OCI-LY7 (cell line): ENCODE measurements at regions of chr16 and their contacts with region 1.

Region 1: GRCh38 chr16:71484006-71484893 is 4.9 kb downstream of the ZNF19 start:
- DNase-seq: peak; percentile 90
- H3K4me3 ChIP-seq: peak overlapping the region; percentile 92
- H3K27ac ChIP-seq: peak overlapping the region; percentile 74
- H3K4me1 ChIP-seq: peaks cover 8% of the 10 kb centered on the region
- CTCF ChIP-seq: no peak

Region 2: DNA sequence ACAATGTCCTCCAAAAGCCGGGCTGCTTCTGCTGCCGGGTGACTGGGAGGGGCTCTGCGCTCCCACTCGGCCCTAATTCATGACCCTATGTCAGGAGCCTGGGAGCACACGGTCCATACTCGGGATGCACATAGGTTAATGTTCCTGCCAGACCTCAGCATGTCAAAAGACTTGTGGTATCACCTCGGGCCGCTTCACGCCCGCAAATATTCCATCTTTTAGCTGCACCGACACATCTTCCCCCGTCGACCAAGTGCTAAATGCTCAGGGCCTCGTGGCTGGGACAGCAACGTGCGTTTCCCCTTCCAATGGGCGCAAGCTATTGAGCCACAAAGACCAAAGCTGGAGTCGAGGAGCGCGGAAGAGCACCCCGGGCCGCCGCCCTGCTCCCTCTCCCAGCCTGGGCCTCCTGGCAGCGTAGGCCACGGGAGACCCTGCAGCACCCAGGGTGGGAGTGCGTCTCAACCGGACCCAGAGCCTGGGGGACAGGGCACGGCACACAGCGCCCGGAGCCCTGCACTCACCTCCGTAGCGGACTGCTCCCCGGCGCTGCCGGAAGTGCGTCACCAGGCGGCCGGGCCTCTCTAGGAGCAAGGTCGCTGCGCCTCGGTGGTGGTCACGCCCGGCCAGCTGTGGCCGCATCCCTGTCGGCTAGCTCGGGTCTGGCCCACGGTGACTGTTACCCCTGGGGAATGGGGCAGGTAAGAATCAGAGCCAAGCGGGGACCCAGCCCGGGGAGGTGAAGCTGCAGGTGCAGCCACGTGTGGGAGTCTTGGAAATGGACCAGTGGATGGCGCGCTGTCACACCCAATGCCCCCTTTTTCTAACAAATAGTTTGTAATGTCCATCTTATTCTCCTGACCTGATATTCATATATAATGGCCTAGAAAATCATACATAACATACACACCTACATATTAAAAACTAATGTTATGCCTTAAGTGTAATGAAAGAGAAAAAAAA is 22.3 kb before region 1 on chr16 and contains the start of gene ZNF23:
- CTCF ChIA-PET with region 1: no interaction called
- POLR2A ChIA-PET with region 1: interaction called, 4 read pairs
- intact Hi-C with region 1: loop called (anchors 1 kb)
- DNase-seq: peak; percentile 86
- H3K4me3 ChIP-seq: peak within 1 kb of the TSS; percentile 98
- H3K27ac ChIP-seq: peak within 1 kb of the TSS; percentile 6
- H3K4me1 ChIP-seq: peaks cover 16% of the 10 kb centered on the region
- CTCF ChIP-seq: peak; percentile 57
- total RNA-seq, gene ZNF23: 6.2 and 7.4 TPM in 2 replicates